ENCODE measurements at regions of chr2 and their contacts with region 1.

Region 1: DNA sequence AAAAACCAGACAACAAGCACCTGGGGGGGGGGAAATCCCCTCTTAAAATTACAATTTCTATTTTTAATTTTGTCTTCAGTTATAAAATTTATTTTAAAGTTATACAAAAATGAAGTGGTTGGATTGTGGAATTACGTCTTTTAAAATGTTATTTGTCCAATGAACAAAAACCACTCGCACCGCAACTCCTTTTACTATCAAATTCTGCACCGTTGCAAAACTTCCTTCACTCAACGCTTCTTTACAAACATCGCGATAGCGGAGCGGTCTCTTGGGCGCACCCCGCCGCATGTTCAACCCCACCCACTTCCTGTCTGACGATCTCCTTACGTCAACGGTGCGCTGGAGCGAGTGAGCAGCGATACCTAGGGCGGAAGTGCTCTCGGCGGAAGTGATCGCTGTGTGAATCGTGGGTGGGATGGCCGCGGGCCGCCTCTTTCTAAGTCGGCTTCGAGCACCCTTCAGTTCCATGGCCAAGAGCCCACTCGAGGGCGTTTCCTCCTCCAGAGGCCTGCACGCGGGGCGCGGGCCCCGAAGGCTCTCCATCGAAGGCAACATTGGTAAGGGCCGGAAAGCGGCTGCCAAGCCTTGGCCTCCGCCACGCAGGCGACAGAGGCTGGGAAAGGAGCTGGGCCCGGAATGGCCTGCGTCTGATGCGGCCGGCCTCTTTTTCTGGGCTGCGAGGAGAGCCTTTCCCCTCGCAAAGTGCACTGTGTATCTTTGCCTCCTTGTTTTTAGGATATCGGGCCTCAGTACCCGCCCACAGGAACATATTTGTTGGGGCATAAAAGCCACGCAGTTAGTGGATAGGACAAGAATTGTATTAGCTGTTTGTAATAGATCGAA is at the start of gene DGUOK:
- DNase-seq: peak; percentile 96 to 99
- H3K4me3 ChIP-seq: peak within 1 kb of the TSS; percentile 76 to 83
- H3K27ac ChIP-seq: peak within 1 kb of the TSS; percentile 95 to 97
- H3K4me1 ChIP-seq: peaks cover 3 to 28% of the 10 kb centered on the region in 2 donors
- H3K27me3 ChIP-seq: no peaks in the 10 kb centered on the region
- CTCF ChIP-seq: no peak
- total RNA-seq, gene DGUOK: 79.7 TPM

Region 2: DNA sequence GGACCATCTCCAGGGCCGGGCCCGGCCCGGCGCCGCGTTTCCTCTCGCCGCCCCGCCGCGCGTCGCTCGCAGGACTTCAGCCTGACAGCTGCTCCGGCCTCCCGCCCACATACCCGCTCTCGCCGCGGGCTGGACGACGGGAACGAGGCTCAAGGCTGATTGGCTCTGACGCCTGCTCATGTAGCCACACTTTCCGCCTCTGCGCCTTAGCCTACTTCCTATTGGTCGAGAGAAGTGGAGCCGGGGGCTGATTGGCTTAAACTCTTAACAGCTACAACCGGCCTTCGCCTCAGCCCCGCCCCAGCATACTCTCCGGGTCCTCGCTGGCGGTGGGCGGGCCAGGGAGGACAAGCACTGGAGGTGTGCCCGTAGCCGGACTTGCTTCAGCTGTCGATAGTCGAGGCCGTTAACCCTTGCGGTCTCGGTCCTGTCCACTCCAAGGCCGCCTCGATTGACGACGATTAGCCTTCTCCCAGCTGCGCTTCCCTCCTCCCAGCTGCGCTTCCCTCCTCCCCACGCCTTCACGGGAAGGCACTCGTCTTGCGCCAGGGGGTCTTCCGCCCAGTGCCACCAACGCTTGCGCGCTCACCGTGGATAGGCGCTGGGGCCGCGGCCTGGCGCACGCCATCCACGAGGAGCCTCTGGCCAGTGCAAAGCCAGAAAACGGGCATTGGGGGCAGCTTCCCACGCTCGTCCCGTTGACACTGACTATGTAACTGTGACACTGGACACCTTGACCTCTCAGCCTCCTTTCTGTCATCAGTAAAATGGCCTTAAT is 693.4 kb before region 1 on chr2 and contains the start of gene PRADC1:
- intact Hi-C with region 1: loop called (anchors 10 kb)
- DNase-seq: peak; percentile 98 to 100
- H3K4me3 ChIP-seq: peak within 1 kb of the TSS; percentile 82 to 85
- H3K27ac ChIP-seq: peak within 1 kb of the TSS; percentile 93 to 96
- H3K4me1 ChIP-seq: peaks cover 4 to 5% of the 10 kb centered on the region in 2 donors
- H3K27me3 ChIP-seq: no peaks in the 10 kb centered on the region
- CTCF ChIP-seq: no peak
- total RNA-seq, gene PRADC1: 77.0 TPM

Region 3: GRCh38 chr2:73870084-73870483 is 56.6 kb before region 1 on chr2:
- intact Hi-C with region 1: loop called (anchors 2 kb)
- DNase-seq: peak; percentile 29 to 94
- H3K4me3 ChIP-seq: no peak overlapping the region
- H3K27ac ChIP-seq: peak overlapping the region; percentile 80 to 86
- H3K4me1 ChIP-seq: peaks cover 0 to 9% of the 10 kb centered on the region in 2 donors
- H3K27me3 ChIP-seq: no peaks in the 10 kb centered on the region
- CTCF ChIP-seq: no peak

Region 4: GRCh38 chr2:74002487-74003391 is 76.0 kb after region 1 on chr2:
- intact Hi-C with region 1: loop called (anchors 2 kb)
- DNase-seq: peak in 1 of 2 donors; percentile 90
- H3K4me3 ChIP-seq: peak overlapping the region; percentile 59 to 69
- H3K27ac ChIP-seq: peak overlapping the region; percentile 28 to 48
- H3K4me1 ChIP-seq: peaks cover 0 to 21% of the 10 kb centered on the region in 2 donors
- H3K27me3 ChIP-seq: no peaks in the 10 kb centered on the region
- CTCF ChIP-seq: peak in 1 of 3 experiments; percentile 30

Region 5: GRCh38 chr2:74147727-74148456 is 221.2 kb after region 1 on chr2 and contains the start of gene BOLA3:
- intact Hi-C with region 1: loop called (anchors 10 kb)
- DNase-seq: peak; percentile 33 to 89
- H3K4me3 ChIP-seq: peak within 1 kb of the TSS; percentile 67 to 80
- H3K27ac ChIP-seq: peak within 1 kb of the TSS; percentile 54 to 74
- H3K4me1 ChIP-seq: peaks cover 5 to 19% of the 10 kb centered on the region in 2 donors
- H3K27me3 ChIP-seq: no peaks in the 10 kb centered on the region
- CTCF ChIP-seq: peak; percentile 50 to 68 (median 61)
- total RNA-seq, gene BOLA3: 47.3 TPM

Measured in ascending aorta (tissue), 2 donors.